Aorta (tissue), 5 donors: ENCODE measurements at regions of chr2 and their contacts with region 1.

Region 1: GRCh38 chr2:17646081-17646554 is 105.6 kb downstream of the VSNL1 start:
- DNase-seq: no peak
- ATAC-seq: peak; percentile 86
- H3K4me3 ChIP-seq: no peak overlapping the region
- H3K27ac ChIP-seq: no peak overlapping the region
- H3K4me1 ChIP-seq: no peaks in the 10 kb centered on the region
- H3K27me3 ChIP-seq: no peaks in the 10 kb centered on the region

Region 2: GRCh38 chr2:17518212-17519154 is 127.6 kb before region 1 on chr2 and contains the start of gene RAD51AP2:
- intact Hi-C with region 1: loop called in 1 of 2 experiments (anchors 10 kb)
- DNase-seq: peak; percentile 78 to 94
- ATAC-seq: peak; percentile 99
- H3K4me3 ChIP-seq: no peak within 1 kb of the TSS
- H3K27ac ChIP-seq: no peak within 1 kb of the TSS
- H3K4me1 ChIP-seq: no peaks in the 10 kb centered on the region
- H3K27me3 ChIP-seq: no peaks in the 10 kb centered on the region
- total RNA-seq, gene RAD51AP2: not detected

Region 3: DNA sequence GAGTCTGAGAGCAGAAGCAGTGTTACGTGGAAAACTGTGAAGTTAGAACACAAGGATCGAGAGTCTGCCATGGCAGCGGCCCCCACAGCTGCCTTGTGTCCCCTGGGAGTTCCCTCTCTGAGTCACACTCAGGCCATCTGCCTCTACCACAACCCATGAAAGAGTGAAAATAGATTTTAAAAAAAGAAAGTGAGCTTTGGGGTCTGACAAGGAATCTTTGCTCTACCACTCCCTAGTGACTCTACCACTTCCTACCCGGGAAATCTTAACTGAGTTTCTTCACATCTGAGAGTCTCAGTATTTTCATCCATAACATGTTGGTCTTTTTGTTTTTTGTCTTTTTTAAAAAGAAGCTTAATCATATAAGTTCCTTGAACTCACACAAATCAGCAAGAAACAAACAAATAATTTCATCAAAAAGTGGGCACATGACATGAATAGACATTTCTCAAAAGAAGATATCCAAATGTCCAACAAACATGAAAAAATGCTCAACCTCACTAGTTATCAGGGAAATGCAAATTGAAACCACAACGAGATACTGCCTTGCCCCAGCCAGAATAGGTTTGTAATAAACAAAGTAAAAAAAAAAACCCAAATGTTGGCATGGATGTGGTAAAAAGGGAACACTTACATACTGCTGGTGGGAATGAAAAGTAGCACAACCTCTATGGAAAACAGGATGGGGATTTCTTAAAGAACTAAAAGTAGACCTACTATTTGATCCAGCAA is 167.8 kb after region 1 on chr2:
- intact Hi-C with region 1: no loop called
- DNase-seq: peak in 1 of 2 donors; percentile 66
- ATAC-seq: no peak
- H3K4me3 ChIP-seq: no peak overlapping the region
- H3K27ac ChIP-seq: peak overlapping the region in 1 of 2 donors; percentile 15
- H3K4me1 ChIP-seq: no peaks in the 10 kb centered on the region
- H3K27me3 ChIP-seq: no peaks in the 10 kb centered on the region